ENCODE measurements at regions of chr4 and their contacts with region 1.

Region 1: GRCh38 chr4:20684852-20685763 is 15.2 kb upstream of the PACRGL start:
- DNase-seq: peak in 1 of 2 experiments; percentile 48
- H3K4me3 ChIP-seq: no peak overlapping the region
- H3K4me1 ChIP-seq: no peaks in the 10 kb centered on the region
- H3K27me3 ChIP-seq: peaks cover 23% of the 10 kb centered on the region

Region 2: DNA sequence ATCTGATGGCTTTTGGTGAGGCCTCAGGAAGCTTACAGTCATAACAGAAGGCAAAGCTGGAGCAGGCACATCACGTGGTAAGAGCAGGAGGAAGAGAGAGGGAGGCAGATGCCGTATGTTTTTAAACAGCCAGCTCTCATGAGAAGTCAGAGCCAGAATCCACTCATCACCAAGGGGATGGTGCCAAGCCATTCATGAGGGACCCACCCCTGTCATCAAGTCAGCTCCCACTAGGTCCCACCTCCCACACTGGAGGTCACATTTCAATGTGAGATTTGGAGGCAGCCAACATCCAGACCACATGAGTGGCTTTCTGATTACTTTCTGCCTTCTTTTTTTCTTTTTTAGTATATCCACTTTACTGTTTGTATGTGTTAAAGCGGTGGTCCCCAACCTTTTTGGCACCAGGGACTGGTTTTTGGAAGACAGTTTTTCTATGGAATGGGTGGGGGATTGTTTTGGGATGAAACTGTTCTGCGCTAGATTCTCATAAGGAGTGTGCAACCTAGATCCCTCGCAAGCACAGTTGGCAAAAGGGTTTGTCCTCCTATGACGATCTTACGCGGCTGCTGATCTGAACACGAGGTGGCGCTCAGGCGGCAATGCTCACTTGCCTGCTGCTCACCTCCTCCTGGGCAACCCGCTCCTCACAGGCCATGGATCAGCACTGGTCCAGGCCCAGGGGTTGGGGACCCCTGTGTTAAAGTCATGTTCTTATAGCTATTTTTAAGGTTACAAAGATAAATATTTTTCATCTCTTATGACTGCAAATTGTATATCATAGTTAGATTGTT is 371.7 kb before region 1 on chr4:
- in situ Hi-C with region 1: loop called (anchors 25 kb)
- DNase-seq: no peak
- H3K4me3 ChIP-seq: no peak overlapping the region
- H3K4me1 ChIP-seq: peaks cover 51% of the 10 kb centered on the region
- H3K27me3 ChIP-seq: no peaks in the 10 kb centered on the region

Measured in HAP-1 (cell line).